ENCODE measurements at regions of chr22 and their contacts with region 1.

Region 1: GRCh38 chr22:50562523-50563412 is at the start of gene SYCE3:
- DNase-seq: peak; percentile 93 to 99 (median 97)
- ATAC-seq: peak; percentile 95 to 98
- H3K4me3 Mint-ChIP-seq: peak within 1 kb of the TSS; percentile 91 to 98 (median 94)
- H3K27ac Mint-ChIP-seq: peak within 1 kb of the TSS; percentile 72 to 96 (median 91)
- H3K4me1 Mint-ChIP-seq: peaks cover 12 to 23% (median 17%) of the 10 kb centered on the region in 4 donors
- H3K27me3 Mint-ChIP-seq: no peaks in the 10 kb centered on the region
- polyA plus RNA-seq, gene SYCE3: not detected

Region 2: GRCh38 chr22:50537765-50538164 is 25.0 kb before region 1 on chr22:
- POLR2A ChIA-PET with region 1: interaction called, 17 read pairs
- DNase-seq: no peak
- ATAC-seq: no peak
- H3K4me3 Mint-ChIP-seq: peak overlapping the region in 4 of 10 donors; percentile 11 to 65 (median 34)
- H3K27ac Mint-ChIP-seq: peak overlapping the region; percentile 63 to 100 (median 86)
- H3K4me1 Mint-ChIP-seq: peaks cover 10 to 70% (median 22%) of the 10 kb centered on the region in 4 donors
- H3K27me3 Mint-ChIP-seq: peaks cover 0 to 4% (median 0%) of the 10 kb centered on the region in 5 donors

Region 3: DNA sequence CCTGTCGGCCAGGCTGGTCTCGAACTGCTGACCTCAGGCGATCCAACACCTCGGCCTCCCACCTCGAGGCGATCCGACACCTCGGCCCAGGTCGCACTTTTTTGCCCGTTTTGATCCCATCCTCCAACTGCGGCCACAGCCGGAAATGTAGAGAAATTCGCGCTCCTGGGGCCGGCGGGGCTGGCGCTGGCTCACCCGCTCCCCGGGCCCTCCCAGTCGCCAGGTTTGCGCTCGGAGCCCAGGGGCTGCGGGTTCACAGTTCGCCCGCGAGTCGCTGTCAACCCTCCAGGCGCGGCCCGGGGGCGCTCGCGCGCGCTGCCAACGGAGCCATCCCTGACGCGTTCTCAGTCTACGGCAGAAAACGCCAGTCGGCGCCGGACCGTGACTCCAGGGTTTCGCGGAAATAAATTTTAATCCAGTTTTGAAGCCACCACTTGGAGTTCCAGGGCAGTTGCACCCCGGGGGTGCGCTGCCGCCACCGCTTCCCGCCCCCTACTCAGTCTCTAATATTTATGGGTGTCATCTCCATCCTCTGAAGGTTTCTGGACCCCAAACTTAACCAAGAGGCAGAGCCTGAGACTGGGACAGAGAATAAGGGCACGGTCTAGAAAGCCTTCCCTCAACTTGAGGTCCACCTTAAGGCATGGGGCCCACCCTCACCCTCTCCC is 18.6 kb before region 1 on chr22:
- POLR2A ChIA-PET with region 1: interaction called, 17 read pairs
- DNase-seq: peak; percentile 65 to 84 (median 72)
- ATAC-seq: peak; percentile 53 to 58
- H3K4me3 Mint-ChIP-seq: peak overlapping the region; percentile 54 to 74 (median 66)
- H3K27ac Mint-ChIP-seq: peak overlapping the region in 9 of 10 donors; percentile 31 to 83 (median 73)
- H3K4me1 Mint-ChIP-seq: peaks cover 13 to 65% (median 35%) of the 10 kb centered on the region in 4 donors
- H3K27me3 Mint-ChIP-seq: no peaks in the 10 kb centered on the region